H1 (cell line): ENCODE measurements at regions of chr1 and their contacts with region 1.

Region 1: GRCh38 chr1:37807555-37808368 is at the starts of genes C1orf122 and YRDC:
- DNase-seq: peak; percentile 76 to 93
- H3K4me3 ChIP-seq: peak within 1 kb of the TSS; percentile 81 to 97 (median 92)
- H3K27ac ChIP-seq: peak within 1 kb of the TSS; percentile 87; the same call in 1 of the 2 replicates
- H3K4me1 ChIP-seq: peaks cover 4 to 14% (median 10%) of the 10 kb centered on the region in 4 experiments; a peak in 6 of 7 replicates
- H3K27me3 ChIP-seq: no peaks in the 10 kb centered on the region
- CTCF ChIP-seq: no peak
- EP300 ChIP-seq: no peak
- POLR2A ChIP-seq: peak; percentile 93
- RAD21 ChIP-seq: no peak
- total RNA-seq, gene C1orf122: 36.9 and 42.4 TPM in 2 replicates
- total RNA-seq, gene YRDC: 21.6 and 23.1 TPM in 2 replicates

Region 2: DNA sequence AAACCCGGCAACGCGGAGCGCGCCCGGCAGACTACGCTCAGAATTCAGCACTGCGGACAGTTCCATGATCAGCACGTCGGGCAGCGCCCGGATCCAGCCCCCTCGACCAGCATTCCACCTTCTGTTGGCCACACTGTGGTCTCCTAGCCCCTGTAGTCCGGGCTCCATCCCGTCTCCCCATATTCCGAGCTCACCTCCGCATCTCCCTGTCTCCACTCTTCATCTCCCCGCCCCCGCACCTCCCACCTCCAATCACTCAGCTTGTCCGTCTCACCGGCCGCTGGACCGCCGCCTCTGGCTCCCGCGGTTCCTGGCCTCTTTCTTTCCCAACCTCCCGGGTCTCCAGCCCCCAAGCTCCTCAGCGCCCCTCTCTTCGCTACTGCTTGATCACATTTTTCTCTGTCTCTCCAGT is 43.3 kb before region 1 on chr1:
- CTCF ChIA-PET with region 1: interaction called, 5 read pairs
- POLR2A ChIA-PET with region 1: interaction called, 23 read pairs
- DNase-seq: peak in 1 of 2 experiments; percentile 94
- H3K4me3 ChIP-seq: peak overlapping the region in 3 of 4 experiments; percentile 42 to 57 (median 47); a peak in 6 of 8 replicates
- H3K27ac ChIP-seq: no peak overlapping the region
- H3K4me1 ChIP-seq: peaks cover 6 to 13% (median 10%) of the 10 kb centered on the region in 4 experiments; a peak in 6 of 7 replicates
- H3K27me3 ChIP-seq: peaks cover 15 to 74% (median 59%) of the 10 kb centered on the region in 4 experiments
- CTCF ChIP-seq: no peak
- EP300 ChIP-seq: no peak
- POLR2A ChIP-seq: no peak
- RAD21 ChIP-seq: 0 out of 4 replicates have a peak, but pooled peaks of 1 of the 2 experiments have one; percentile 9

Region 3: DNA sequence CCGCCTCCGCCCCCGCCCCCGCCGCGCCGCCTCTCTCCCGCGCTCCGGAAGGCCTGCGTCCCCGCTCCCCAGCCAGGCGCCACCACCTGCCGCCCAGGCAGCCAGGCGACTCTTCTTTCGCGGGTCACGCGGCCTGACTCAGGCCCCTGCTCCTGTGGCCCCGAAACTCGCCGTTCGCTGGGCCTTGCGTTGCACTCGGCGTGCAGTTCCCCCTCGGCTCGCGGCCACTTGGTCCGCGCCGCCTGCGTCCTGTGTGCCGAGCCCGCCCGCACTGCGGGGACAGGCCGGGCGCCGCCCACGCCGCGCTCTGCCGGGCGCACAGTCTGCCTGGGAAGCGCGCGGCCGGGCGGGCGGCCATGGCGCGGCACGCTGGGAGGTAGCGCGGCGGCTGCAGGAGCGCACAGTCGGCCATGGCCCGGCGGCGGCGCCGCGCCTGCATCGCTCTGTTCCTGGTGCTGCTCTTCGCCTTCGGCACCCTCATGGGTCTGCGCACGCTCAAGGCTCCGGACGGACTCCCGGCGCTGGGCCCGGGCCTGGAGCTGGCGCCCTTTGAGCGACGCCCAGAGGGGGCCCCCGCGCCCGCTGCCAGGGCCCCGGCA is 13.9 kb before region 1 on chr1 and contains the start of gene MANEAL:
- CTCF ChIA-PET with region 1: no interaction called
- POLR2A ChIA-PET with region 1: interaction called, 26 read pairs
- DNase-seq: peak in 1 of 2 experiments; percentile 60
- H3K4me3 ChIP-seq: peak within 1 kb of the TSS; percentile 60 to 79 (median 68)
- H3K27ac ChIP-seq: no peak within 1 kb of the TSS
- H3K4me1 ChIP-seq: peaks cover 0 to 7% (median 5%) of the 10 kb centered on the region in 4 experiments; a peak in 6 of 7 replicates
- H3K27me3 ChIP-seq: peaks cover 10 to 38% (median 31%) of the 10 kb centered on the region in 4 experiments
- CTCF ChIP-seq: no peak
- EP300 ChIP-seq: no peak
- POLR2A ChIP-seq: no peak
- RAD21 ChIP-seq: no peak
- total RNA-seq, gene MANEAL: 4.2 and 4.8 TPM in 2 replicates

Region 4: GRCh38 chr1:37859507-37860345 is 52.0 kb after region 1 on chr1 and contains the start of gene MTF1:
- CTCF ChIA-PET with region 1: interaction called, 3 read pairs
- POLR2A ChIA-PET with region 1: interaction called, 23 read pairs
- DNase-seq: peak; percentile 82 to 97
- H3K4me3 ChIP-seq: peak within 1 kb of the TSS; percentile 83 to 100 (median 94)
- H3K27ac ChIP-seq: peak within 1 kb of the TSS; percentile 87
- H3K4me1 ChIP-seq: no peaks in the 10 kb centered on the region
- H3K27me3 ChIP-seq: no peaks in the 10 kb centered on the region
- CTCF ChIP-seq: peak; percentile 77 to 95 (median 91)
- EP300 ChIP-seq: no peak
- POLR2A ChIP-seq: peak; percentile 77 to 94
- RAD21 ChIP-seq: peak; percentile 58 to 61; a peak in 3 of 4 replicates
- total RNA-seq, gene MTF1: 12.6 and 15.5 TPM in 2 replicates

Region 5: DNA sequence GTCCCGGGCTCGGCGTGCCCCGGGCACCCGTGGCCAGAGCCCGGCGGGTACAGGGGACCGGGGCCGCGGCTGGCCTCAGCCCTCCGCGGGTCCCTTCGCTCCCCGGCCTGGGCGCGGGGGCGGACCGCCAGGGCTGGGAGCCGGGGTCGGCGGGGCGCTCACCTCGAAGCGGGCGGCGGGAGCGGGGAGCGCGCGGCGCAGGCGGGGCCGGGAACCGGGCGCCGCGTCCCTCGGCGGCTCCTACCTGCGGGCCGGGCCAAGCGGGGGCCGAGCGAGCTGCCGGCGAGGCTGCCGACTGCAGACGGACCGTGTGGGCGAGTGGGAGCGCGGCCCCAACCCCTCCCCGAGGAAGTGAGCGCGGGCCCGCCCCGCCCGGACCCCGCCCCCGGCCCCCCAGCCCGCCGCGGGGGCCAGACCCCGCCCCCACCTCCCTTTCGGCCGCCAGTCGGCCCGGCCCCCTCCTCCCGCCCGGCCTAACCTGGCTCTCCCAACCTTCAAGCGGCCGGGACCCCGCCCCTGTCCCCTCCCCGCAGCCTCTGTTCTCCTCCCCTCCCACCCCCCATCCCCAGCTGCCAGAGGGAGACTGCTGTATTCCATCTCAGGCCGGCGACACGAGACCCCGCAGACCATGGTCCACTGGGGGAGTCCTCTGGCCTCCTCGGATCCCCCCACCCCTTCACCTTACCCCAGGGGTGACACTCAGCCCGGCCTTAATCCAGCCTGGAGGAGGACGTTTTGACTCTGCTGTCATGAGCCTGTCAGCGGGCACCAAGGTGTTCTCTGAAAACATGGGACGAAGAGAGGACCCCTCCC is 197.6 kb after region 1 on chr1 and contains the start of gene FHL3:
- CTCF ChIA-PET with region 1: no interaction called
- POLR2A ChIA-PET with region 1: no interaction called
- DNase-seq: peak in 1 of 2 experiments; percentile 80
- H3K4me3 ChIP-seq: peak within 1 kb of the TSS; percentile 60 to 72 (median 66)
- H3K27ac ChIP-seq: no peak within 1 kb of the TSS
- H3K4me1 ChIP-seq: peaks cover 22 to 44% (median 30%) of the 10 kb centered on the region in 4 experiments
- H3K27me3 ChIP-seq: peaks cover 0 to 3% (median 2%) of the 10 kb centered on the region in 4 experiments; a peak in 2 of 7 replicates
- CTCF ChIP-seq: no peak
- EP300 ChIP-seq: no peak
- POLR2A ChIP-seq: peak in 1 of 2 experiments; percentile 44; a peak in 1 of 3 replicates
- RAD21 ChIP-seq: no peak
- total RNA-seq, gene FHL3: 35.6 and 35.8 TPM in 2 replicates

Region 6: GRCh38 chr1:38191461-38191860 is 383.7 kb after region 1 on chr1:
- CTCF ChIA-PET with region 1: no interaction called
- POLR2A ChIA-PET with region 1: no interaction called
- DNase-seq: no peak
- H3K4me3 ChIP-seq: no peak overlapping the region
- H3K27ac ChIP-seq: no peak overlapping the region
- H3K4me1 ChIP-seq: peaks cover 0 to 2% (median 0%) of the 10 kb centered on the region in 4 experiments; a peak in 2 of 7 replicates
- H3K27me3 ChIP-seq: peaks cover 0 to 3% (median 0%) of the 10 kb centered on the region in 4 experiments; a peak in 1 of 7 replicates
- CTCF ChIP-seq: no peak
- EP300 ChIP-seq: no peak
- POLR2A ChIP-seq: no peak
- RAD21 ChIP-seq: no peak